CD4-positive, alpha-beta memory T cell (primary cell): ENCODE measurements at regions of chr10 and their contacts with region 1.

Region 1: DNA sequence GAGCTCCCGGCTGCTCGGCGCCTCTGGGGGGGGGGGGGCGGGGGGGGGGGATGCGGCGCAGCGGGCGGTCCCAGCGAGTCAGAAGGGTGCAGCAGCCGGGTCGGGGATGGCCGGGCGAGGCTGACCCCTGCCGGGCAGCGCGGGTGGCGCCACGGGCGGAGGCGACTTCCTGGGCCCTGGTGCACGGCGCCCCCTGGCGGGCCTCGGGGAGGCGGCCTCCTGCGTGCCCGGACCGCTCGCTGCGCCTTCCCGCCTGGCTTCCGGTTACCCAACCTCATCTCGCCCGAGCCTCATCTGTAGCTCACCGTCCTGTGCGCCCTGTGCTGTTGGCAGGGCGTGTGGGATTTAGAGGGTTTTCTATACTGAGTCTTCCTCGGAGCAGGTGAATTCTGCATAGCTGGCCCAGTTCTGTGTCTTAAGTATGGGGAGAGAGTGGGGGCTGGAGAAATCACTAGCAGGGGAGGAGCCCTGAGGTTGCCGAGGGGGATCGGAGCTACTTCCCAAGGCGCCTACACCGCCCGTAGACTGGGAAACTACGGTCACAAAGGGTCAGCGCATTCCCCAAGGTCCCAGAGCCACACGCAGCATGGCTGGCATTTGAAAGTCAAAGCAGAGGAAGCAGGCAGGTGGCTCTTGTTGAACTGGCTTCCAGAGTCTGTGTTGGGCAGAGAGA is 28.3 kb upstream of the WDFY4 start:
- DNase-seq: peak; percentile 74 to 81 (median 78)
- H3K4me3 ChIP-seq: peak overlapping the region in 1 of 2 donors; percentile 12
- H3K4me3 Mint-ChIP-seq: peak overlapping the region; percentile 77 to 89 (median 85)
- H3K27ac ChIP-seq: no peak overlapping the region
- H3K27ac Mint-ChIP-seq: no peak overlapping the region
- H3K4me1 ChIP-seq: peaks cover 12% of the 10 kb centered on the region
- H3K4me1 Mint-ChIP-seq: peaks cover 3 to 13% (median 6%) of the 10 kb centered on the region in 4 donors
- H3K27me3 ChIP-seq: no peaks in the 10 kb centered on the region
- H3K27me3 Mint-ChIP-seq: peaks cover 7 to 9% of the 10 kb centered on the region in 2 donors

Region 2: GRCh38 chr10:48306265-48306869 is 350.0 kb before region 1 on chr10 and contains the start of gene MAPK8:
- CTCF ChIA-PET with region 1: interaction called, 4 read pairs
- POLR2A ChIA-PET with region 1: no interaction called
- intact Hi-C with region 1: loop called (anchors 5 kb)
- DNase-seq: peak; percentile 92 to 94 (median 92)
- H3K4me3 ChIP-seq: peak within 1 kb of the TSS; percentile 62 to 83
- H3K4me3 Mint-ChIP-seq: peak within 1 kb of the TSS; percentile 77 to 93 (median 86)
- H3K27ac ChIP-seq: peak within 1 kb of the TSS; percentile 75
- H3K27ac Mint-ChIP-seq: peak within 1 kb of the TSS; percentile 87 to 97 (median 93)
- H3K4me1 ChIP-seq: peaks cover 23% of the 10 kb centered on the region
- H3K4me1 Mint-ChIP-seq: peaks cover 20 to 39% (median 27%) of the 10 kb centered on the region in 4 donors
- H3K27me3 ChIP-seq: no peaks in the 10 kb centered on the region
- H3K27me3 Mint-ChIP-seq: no peaks in the 10 kb centered on the region
- total RNA-seq, gene MAPK8: 47.6 to 49.9 TPM

Region 3: DNA sequence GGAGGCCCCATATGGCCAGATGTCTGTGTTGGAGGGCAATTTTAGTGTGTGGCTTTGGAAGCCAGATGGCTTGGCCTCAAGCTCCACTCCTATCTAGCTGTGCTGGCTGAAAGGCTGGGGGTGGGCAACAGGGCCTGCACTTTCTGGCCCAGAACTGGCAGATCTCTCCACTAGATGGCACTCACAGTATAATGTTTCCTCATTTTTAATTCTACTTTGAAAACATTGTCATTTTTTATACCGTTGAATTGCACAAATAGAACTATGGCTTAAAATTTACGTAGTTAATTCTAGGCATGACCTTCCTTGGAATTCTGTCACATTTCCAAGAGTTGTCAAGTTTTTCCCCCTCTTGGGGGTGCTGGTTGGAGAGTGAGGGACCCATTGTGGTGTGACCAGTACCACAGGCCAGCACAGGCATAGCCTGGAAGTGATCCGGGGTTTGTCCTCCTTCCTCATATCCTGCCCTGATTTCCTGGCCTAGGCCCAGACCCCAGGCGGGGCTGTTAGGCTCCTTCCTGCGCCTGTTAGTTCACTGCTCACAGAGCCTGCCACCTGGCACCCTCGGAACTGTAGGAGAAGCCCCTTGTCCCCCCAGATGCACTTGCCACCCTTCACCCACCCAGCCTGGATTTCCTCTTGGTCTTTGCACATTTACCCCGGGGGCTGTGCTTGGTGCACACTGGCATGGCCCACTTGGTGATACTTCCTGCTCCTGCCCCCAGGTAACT is 104.4 kb before region 1 on chr10:
- CTCF ChIA-PET with region 1: interaction called, 7 read pairs
- POLR2A ChIA-PET with region 1: no interaction called
- intact Hi-C with region 1: loop called (anchors 1 kb)
- DNase-seq: no peak
- H3K4me3 ChIP-seq: no peak overlapping the region
- H3K4me3 Mint-ChIP-seq: no peak overlapping the region
- H3K27ac ChIP-seq: no peak overlapping the region
- H3K27ac Mint-ChIP-seq: no peak overlapping the region
- H3K4me1 ChIP-seq: no peaks in the 10 kb centered on the region
- H3K4me1 Mint-ChIP-seq: no peaks in the 10 kb centered on the region
- H3K27me3 ChIP-seq: no peaks in the 10 kb centered on the region
- H3K27me3 Mint-ChIP-seq: no peaks in the 10 kb centered on the region

Region 4: DNA sequence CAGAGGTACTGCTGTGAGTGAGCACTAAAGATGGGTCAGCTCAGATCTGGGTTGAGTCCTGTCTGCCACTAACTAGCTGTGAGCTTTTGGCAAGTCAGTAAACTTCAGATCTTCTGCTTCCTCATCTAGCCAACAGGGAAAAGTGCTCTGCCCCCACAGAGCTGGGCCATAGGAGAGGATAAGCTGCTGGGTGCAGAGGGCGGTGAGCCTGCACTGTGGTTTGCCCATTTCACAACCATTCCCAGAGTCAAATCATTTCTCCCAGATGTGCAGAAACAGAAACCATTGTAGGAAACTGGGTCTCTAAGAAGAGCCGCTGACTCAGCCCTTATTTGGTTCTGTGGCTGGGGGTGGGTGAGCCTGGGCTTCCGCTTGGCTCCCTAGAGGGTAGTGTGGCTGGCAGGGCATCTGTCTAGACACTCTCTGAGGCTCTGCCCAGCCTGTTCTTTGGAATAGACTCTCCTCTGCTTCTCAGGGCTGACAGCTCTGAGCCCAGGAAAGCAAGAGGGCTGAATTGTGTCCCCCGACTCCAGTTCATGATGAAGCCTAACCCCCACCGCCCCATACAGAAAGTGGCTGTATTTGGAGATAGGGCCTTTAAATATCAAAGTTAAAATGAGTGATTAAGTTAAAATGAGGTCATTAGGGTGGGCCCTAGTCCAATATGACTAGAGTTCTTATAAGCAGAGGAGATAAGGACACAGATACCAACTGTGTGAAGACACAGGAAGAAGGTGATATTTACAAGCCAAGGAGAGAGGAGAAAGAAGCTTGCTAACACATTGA is 22.0 kb before region 1 on chr10:
- CTCF ChIA-PET with region 1: interaction called, 12 read pairs
- POLR2A ChIA-PET with region 1: interaction called, 9 read pairs
- intact Hi-C with region 1: no loop called
- DNase-seq: no peak
- H3K4me3 ChIP-seq: no peak overlapping the region
- H3K4me3 Mint-ChIP-seq: peak overlapping the region in 7 of 8 donors; percentile 11 to 63 (median 46)
- H3K27ac ChIP-seq: no peak overlapping the region
- H3K27ac Mint-ChIP-seq: peak overlapping the region in 5 of 7 donors; percentile 32 to 77 (median 53)
- H3K4me1 ChIP-seq: peaks cover 13% of the 10 kb centered on the region
- H3K4me1 Mint-ChIP-seq: peaks cover 2 to 18% (median 13%) of the 10 kb centered on the region in 4 donors
- H3K27me3 ChIP-seq: no peaks in the 10 kb centered on the region
- H3K27me3 Mint-ChIP-seq: peaks cover 13 to 17% of the 10 kb centered on the region in 2 donors

Region 5: DNA sequence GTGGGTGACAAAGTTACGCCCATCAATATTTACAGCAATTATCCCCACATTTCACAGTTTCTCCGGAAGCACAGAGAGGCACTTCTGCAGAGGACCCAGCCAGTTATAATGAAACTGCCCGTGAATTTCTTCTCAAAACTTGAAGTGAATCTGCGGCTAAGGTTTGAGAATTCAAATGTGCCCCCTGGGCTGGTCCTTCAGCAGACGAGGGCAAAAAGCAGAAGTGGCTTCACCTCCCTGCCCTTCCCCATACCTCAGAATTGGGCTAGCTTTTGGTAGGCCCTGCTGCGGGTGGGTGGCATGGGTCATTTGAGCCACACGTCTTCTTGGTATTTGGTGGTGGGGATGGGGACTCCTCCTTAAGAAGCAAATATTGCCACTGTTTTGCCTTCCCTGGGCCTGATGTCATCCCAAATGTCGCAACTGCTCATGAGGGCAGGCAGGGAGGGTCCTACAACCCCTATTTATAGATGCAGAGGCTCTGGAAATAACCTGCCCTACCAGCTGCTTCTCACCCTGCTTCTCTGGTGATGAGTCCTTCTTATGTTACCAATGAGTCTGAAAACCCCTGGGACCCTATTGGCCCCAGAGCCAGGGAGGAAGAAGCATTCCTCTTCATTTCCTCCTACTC is 11.7 kb after region 1 on chr10:
- CTCF ChIA-PET with region 1: interaction called, 35 read pairs
- POLR2A ChIA-PET with region 1: no interaction called
- intact Hi-C with region 1: no loop called
- DNase-seq: no peak
- H3K4me3 ChIP-seq: no peak overlapping the region
- H3K4me3 Mint-ChIP-seq: no peak overlapping the region
- H3K27ac ChIP-seq: no peak overlapping the region
- H3K27ac Mint-ChIP-seq: no peak overlapping the region
- H3K4me1 ChIP-seq: no peaks in the 10 kb centered on the region
- H3K4me1 Mint-ChIP-seq: no peaks in the 10 kb centered on the region
- H3K27me3 ChIP-seq: no peaks in the 10 kb centered on the region
- H3K27me3 Mint-ChIP-seq: peaks cover 6 to 11% of the 10 kb centered on the region in 2 donors

Region 6: DNA sequence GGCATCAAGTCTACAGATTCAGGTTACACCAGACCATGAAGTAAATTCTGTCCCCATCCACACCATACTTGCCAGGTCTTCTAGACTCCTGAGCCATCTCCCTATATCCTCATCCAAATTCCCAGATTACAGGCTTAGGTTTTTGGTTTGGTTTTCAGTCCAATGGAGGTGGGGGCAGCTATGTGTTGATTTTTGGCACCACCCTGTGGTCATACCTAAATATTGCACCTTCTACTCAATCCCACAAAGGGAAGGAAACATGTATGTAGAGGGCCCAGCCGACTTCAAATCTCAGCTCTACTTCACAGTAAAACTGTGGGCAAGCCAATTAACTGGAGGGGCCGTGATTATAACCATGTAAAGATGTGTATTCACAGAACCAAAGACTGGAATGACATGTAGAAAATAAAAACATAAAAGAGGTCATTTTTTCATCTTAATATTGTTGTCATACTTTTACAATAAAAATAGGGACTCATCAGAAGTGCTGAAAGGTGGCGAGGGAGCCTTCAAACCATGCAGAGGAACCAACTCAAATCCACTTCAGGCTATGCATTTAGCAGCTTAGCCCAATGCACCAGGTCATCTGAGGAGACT is 862.7 kb after region 1 on chr10:
- CTCF ChIA-PET with region 1: interaction called, 23 read pairs
- POLR2A ChIA-PET with region 1: no interaction called
- intact Hi-C with region 1: no loop called
- DNase-seq: peak in 4 of 5 donors; percentile 38 to 46 (median 40)
- H3K4me3 ChIP-seq: no peak overlapping the region
- H3K4me3 Mint-ChIP-seq: no peak overlapping the region
- H3K27ac ChIP-seq: no peak overlapping the region
- H3K27ac Mint-ChIP-seq: peak overlapping the region in 1 of 7 donors; percentile 64
- H3K4me1 ChIP-seq: no peaks in the 10 kb centered on the region
- H3K4me1 Mint-ChIP-seq: peaks cover 6 to 10% (median 8%) of the 10 kb centered on the region in 4 donors
- H3K27me3 ChIP-seq: no peaks in the 10 kb centered on the region
- H3K27me3 Mint-ChIP-seq: no peaks in the 10 kb centered on the region